AG04450 (cell line): ENCODE measurements at regions of chr1 and their contacts with region 1.

Region 1: DNA sequence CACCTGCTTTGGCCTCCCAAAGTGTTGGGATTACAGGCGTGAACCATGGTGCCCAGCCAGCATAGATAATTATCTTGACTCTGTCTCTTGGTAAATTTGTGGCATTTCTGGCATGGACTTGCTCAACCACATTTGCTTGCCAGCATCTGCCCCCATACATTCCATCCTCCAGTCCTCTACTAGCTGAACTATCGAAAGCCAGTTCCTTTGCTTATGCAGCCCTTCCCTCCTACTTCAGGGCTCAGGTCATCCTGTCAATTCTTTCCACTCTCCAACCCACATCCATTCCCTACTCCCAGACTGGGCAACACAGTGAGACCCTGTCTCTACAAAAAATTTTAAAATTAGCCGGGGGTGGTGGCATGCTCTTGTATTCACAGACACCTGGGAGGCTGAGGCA is 13.0 kb upstream of the UQCRHL start:
- DNase-seq: no peak
- H3K4me3 ChIP-seq: no peak overlapping the region
- H3K27ac ChIP-seq: no peak overlapping the region
- H3K27me3 ChIP-seq: no peaks in the 10 kb centered on the region
- CTCF ChIP-seq: no peak

Region 2: DNA sequence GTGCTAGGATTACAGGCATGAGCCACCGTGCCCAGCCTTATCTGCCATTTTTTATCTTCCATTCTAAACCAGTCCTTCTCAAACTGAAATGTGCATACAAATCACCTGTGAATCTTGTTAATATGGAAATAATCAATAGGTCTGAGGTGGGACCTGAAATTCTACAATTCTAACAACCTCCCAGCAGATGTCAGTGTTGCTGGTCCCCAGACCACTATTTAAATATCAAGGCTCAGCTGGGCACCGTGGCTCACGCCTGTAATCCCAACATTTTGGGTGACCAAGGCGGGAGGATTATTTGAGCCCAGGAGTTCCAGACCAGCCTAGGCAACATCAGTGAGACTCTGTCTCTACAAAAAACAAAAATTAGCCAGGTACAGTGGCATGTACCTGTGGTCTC is 17.1 kb before region 1 on chr1:
- CTCF ChIA-PET with region 1: interaction called, 43 read pairs
- POLR2A ChIA-PET with region 1: interaction called, 4 read pairs
- DNase-seq: no peak
- H3K4me3 ChIP-seq: no peak overlapping the region
- H3K27ac ChIP-seq: no peak overlapping the region
- H3K27me3 ChIP-seq: no peaks in the 10 kb centered on the region
- CTCF ChIP-seq: peak; percentile 48

Region 3: DNA sequence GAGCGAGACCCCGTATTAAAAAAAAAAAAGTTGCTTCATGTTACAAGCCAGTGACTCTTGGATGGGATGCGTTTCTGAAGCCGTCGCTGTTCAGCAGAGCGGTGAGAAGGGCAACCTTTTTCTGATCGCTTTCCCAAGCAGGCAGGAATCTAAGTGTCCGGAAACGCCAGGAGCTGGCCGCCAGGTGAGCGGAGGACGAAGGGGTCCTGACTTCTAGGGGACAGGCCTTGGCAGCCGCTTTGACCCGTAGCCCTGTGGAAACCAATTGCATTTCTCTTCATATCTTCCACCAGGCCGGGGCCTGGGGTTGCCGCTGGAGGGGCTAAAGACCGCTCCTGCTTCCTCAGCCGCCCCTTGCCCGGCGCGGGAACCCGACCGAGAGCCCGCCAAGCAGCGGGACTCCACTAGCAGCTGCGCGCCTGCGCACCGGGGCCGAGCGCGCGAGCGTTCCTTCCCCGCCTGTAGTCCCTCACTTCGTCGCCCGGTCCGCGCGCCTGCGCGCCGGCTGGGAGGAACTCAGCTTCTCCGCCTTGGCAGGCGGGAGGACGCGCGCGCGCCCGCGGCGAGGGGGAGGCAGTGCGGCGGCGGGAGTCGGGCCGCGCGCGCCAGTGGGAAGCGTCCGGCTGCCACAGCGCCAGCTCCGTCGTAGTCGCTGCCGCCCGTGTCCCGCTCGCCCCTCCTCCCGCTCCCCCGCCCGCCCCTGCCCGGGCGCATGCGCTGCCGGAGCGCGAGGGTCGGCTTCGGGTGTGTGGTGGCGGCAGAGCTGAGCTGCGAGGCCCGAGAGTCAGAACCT is 26.8 kb after region 1 on chr1 and contains the start of gene SPEN:
- CTCF ChIA-PET with region 1: interaction called, 10 read pairs
- POLR2A ChIA-PET with region 1: interaction called, 5 read pairs
- DNase-seq: peak; percentile 89
- H3K4me3 ChIP-seq: peak within 1 kb of the TSS; percentile 87
- H3K27ac ChIP-seq: peak within 1 kb of the TSS; percentile 75
- H3K27me3 ChIP-seq: no peaks in the 10 kb centered on the region
- CTCF ChIP-seq: no peak
- polyA plus RNA-seq, gene SPEN: 5.2 and 5.4 TPM in 2 replicates

Region 4: DNA sequence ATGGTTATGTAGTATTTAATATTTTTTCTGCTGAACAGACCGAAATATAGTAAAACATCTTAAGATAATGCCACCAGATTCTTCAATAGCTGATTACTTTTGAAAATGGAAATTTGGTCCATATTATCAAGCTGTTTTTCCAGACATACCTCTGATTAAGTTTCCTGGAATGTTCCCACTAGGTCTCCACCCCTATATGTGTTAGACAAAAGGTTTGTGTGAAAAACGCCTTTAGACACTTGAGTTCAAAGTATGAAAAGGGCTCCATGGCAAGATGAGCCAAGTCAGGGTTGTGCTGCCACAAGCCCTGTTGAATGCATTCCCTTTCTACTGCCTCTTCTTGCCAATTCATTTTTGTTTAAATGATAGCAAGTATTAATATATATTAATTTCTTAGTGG is 102.8 kb after region 1 on chr1:
- CTCF ChIA-PET with region 1: interaction called, 18 read pairs
- POLR2A ChIA-PET with region 1: no interaction called
- DNase-seq: no peak
- H3K4me3 ChIP-seq: no peak overlapping the region
- H3K27ac ChIP-seq: no peak overlapping the region
- H3K27me3 ChIP-seq: no peaks in the 10 kb centered on the region
- CTCF ChIP-seq: no peak

Region 5: GRCh38 chr1:15994590-15995351 is 174.3 kb after region 1 on chr1:
- CTCF ChIA-PET with region 1: interaction called, 33 read pairs
- POLR2A ChIA-PET with region 1: no interaction called
- DNase-seq: no peak
- H3K4me3 ChIP-seq: no peak overlapping the region
- H3K27ac ChIP-seq: no peak overlapping the region
- H3K27me3 ChIP-seq: no peaks in the 10 kb centered on the region
- CTCF ChIP-seq: peak; percentile 95